MCF 10A (cell line): ENCODE measurements at regions of chr6 and their contacts with region 1.

Region 1: DNA sequence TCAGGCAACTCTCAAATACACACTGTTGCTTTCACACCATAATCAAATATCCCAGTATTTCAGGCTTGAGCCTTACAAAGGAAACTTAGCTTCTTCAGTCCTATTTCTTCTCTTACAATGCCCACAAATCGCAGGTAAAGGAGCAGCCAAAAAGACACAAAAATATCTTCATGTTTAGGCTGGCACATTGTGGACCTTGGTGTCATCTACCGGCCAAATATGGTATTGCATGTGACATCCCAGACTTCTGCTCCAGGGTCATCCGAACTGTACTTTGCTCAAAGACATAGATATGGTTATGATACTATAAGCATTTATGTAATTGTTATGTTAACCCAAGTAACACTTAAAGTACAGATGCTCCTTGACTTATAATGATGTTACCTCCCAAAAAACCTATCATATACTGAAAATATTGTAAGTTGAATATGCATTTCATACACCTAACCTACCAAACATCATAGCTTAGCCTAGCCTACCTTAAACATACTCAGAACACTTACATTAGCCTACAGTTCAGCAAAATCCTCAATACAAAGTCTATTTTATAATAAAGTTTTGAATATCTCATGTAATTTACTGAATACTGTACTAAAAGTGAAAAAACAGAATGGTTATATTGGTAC is 4.6 kb downstream of the OR2H2 start:
- DNase-seq: peak; percentile 65
- H3K4me3 Mint-ChIP-seq: no peak overlapping the region
- H3K27ac Mint-ChIP-seq: no peak overlapping the region
- H3K4me1 Mint-ChIP-seq: no peaks in the 10 kb centered on the region
- H3K27me3 Mint-ChIP-seq: peaks cover 68% of the 10 kb centered on the region
- CTCF ChIP-seq: peak; percentile 92

Region 2: DNA sequence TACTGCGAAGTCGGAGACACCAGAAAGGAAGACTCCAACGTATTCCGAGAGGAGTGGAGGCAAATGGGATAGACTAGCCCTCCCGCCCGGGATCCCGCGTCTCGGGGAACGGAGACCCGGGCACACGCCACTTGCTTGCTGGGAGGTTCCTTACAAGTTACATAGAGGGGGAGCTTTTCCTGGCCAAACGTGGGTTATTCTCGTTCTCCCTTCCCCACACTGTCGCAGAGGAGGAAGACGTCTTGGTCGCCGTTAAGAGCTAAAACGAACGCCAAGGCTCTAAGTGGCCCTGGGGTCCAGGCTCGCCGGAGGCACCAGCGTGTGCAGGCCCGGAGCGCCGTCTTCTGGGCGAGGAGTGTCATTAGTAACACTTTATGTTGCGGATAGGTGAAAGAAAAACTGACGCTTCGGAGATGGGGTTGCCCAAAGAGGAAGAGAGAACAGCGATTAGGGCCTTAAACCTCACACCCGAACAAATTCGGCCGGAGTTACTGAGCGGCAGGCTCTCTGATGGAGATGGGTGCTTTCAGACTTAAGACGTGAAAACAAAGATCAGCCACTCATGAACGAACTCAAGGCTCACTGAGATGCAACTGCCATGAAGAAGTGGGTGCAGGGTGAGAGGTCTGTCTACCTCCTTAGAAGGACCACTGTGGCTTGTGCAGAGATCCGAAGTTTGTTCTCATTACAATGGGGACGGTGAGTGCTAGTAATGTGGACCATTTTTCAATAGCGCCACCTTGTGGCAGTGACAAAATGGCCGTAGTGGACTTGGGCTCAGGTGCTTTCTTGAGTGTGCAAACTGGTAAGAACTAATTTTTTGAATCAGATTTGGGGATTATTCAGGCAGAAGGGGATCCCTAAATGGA is 572.7 kb before region 1 on chr6:
- CTCF ChIA-PET with region 1: interaction called, 8 read pairs
- POLR2A ChIA-PET with region 1: no interaction called
- intact Hi-C with region 1: loop called (anchors 5 kb)
- DNase-seq: peak; percentile 89
- H3K4me3 Mint-ChIP-seq: peak overlapping the region; percentile 69
- H3K27ac Mint-ChIP-seq: no peak overlapping the region
- H3K4me1 Mint-ChIP-seq: peaks cover 12% of the 10 kb centered on the region
- H3K27me3 Mint-ChIP-seq: peaks cover 4% of the 10 kb centered on the region
- CTCF ChIP-seq: peak; percentile 79

Region 3: DNA sequence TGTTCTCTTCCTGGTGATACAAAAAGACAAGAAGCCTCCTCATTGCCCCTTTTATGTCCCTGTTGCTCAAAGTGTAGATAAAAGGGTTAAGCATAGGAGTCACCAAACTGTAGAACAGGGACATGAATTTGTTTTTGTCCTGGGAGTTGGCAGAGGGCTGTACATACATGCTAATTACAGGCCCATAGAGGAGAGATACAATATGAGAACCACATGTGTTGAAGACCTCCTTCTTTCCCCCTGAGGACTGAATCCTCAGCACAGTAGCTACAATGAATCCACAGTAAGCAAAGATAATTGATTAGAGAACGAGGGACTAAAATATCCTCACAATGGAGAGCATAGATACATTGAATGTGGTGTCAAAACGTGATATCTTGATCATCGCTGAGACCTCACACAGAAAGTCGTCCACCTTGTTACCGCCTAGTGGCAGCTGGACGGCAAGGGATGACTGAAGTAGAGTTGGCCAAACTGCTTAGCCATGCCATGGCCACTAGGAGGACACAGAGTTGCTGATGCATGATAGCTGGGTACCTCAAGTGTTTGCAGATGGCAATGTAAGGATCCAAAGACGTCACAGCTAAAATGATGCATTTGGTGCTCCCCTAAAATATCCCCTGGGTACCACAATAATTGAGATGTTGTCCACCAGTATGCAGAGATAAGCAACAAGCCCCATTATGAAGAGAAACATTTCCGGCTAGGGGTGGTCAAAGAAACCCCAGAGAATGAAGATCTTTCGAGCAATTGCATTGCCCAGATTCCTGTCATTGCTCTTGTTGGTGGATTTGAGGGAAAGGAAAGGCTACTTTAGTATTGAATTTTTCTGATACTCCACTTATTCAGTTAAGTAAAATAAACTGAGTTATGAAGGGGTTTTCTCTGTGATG is 517.5 kb before region 1 on chr6:
- CTCF ChIA-PET with region 1: no interaction called
- POLR2A ChIA-PET with region 1: no interaction called
- intact Hi-C with region 1: loop called (anchors 5 kb)
- DNase-seq: peak; percentile 66
- H3K4me3 Mint-ChIP-seq: no peak overlapping the region
- H3K27ac Mint-ChIP-seq: no peak overlapping the region
- H3K4me1 Mint-ChIP-seq: no peaks in the 10 kb centered on the region
- H3K27me3 Mint-ChIP-seq: peaks cover 66% of the 10 kb centered on the region
- CTCF ChIP-seq: peak; percentile 64

Region 4: GRCh38 chr6:29376003-29376402 is 213.5 kb before region 1 on chr6:
- CTCF ChIA-PET with region 1: interaction called, 5 read pairs
- POLR2A ChIA-PET with region 1: interaction called, 3 read pairs
- intact Hi-C with region 1: loop called (anchors 1 kb)
- DNase-seq: peak; percentile 19
- H3K4me3 Mint-ChIP-seq: no peak overlapping the region
- H3K27ac Mint-ChIP-seq: no peak overlapping the region
- H3K4me1 Mint-ChIP-seq: no peaks in the 10 kb centered on the region
- H3K27me3 Mint-ChIP-seq: peaks cover 49% of the 10 kb centered on the region
- CTCF ChIP-seq: no peak

Region 5: DNA sequence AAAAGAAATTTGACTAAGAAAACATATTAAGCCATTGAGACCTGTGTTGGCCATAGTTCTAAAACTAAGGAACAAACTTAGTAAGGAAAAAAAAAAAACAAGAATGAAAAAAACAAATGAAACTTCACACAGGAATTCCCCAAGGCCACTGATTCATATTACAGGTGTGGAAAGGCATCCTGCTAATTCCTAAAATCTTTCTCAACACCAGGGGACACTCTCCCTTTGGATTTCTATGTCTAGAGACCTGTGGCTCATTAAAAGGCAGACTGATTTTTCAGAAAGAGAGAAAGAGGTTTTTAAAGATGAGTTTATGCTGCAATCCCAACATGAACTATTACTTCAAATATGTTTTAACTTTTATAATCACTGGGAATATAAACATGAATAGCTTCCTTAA is 174.9 kb before region 1 on chr6 and contains the start of gene OR12D1:
- CTCF ChIA-PET with region 1: interaction called, 26 read pairs
- POLR2A ChIA-PET with region 1: no interaction called
- intact Hi-C with region 1: loop called (anchors 1 kb)
- DNase-seq: peak; percentile 40
- H3K4me3 Mint-ChIP-seq: no peak within 1 kb of the TSS
- H3K27ac Mint-ChIP-seq: no peak within 1 kb of the TSS
- H3K4me1 Mint-ChIP-seq: no peaks in the 10 kb centered on the region
- H3K27me3 Mint-ChIP-seq: peaks cover 62% of the 10 kb centered on the region
- CTCF ChIP-seq: peak; percentile 23
- total RNA-seq, gene OR12D1: not detected in 2 replicates

Region 6: DNA sequence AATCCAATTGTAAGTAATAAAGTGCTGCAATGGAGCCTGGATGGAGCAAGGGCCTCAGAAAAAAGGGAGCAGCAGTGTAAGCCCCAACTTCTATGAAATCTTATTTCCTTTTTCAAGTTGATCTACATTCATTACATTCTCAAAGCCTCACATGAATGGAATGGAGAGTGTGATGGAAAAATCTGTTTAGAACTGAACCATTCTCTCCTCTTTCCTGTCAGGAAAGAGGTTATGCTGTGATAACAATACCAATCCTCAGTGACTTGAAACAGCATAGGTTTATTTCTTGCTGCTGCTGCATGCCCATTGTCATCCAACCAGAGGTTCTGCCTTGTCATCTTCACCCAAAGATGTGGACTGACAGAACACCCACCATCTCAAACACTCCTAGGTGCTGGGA is 13.5 kb before region 1 on chr6:
- CTCF ChIA-PET with region 1: interaction called, 10 read pairs
- POLR2A ChIA-PET with region 1: no interaction called
- intact Hi-C with region 1: no loop called
- DNase-seq: no peak
- H3K4me3 Mint-ChIP-seq: no peak overlapping the region
- H3K27ac Mint-ChIP-seq: no peak overlapping the region
- H3K4me1 Mint-ChIP-seq: no peaks in the 10 kb centered on the region
- H3K27me3 Mint-ChIP-seq: peaks cover 91% of the 10 kb centered on the region
- CTCF ChIP-seq: no peak